ENCODE measurements at regions of chr13 and their contacts with region 1.

Region 1: GRCh38 chr13:40682449-40683240 is 16.2 kb upstream of the FOXO1 start:
- DNase-seq: no peak
- H3K4me3 ChIP-seq: no peak overlapping the region
- CTCF ChIP-seq: no peak

Region 2: GRCh38 chr13:39676315-39676876 is 1006.2 kb before region 1 on chr13:
- in situ Hi-C with region 1: loop called (anchors 25 kb)
- DNase-seq: peak; percentile 58
- H3K4me3 ChIP-seq: no peak overlapping the region
- CTCF ChIP-seq: peak; percentile 5

Region 3: GRCh38 chr13:40777166-40777808 is 94.6 kb after region 1 on chr13:
- in situ Hi-C with region 1: no loop called
- DNase-seq: no peak
- H3K4me3 ChIP-seq: no peak overlapping the region
- CTCF ChIP-seq: peak; percentile 58